ENCODE measurements at regions of chr18 and their contacts with region 1.

Region 1: GRCh38 chr18:23377669-23378301 is 75.3 kb upstream of the RIOK3 start:
- DNase-seq: no peak
- ATAC-seq: peak in 3 of 4 donors; percentile 41 to 63 (median 47)
- H3K4me3 ChIP-seq: no peak overlapping the region
- H3K27ac ChIP-seq: no peak overlapping the region
- H3K4me1 ChIP-seq: no peaks in the 10 kb centered on the region
- H3K27me3 ChIP-seq: no peaks in the 10 kb centered on the region
- CTCF ChIP-seq: no peak

Region 2: DNA sequence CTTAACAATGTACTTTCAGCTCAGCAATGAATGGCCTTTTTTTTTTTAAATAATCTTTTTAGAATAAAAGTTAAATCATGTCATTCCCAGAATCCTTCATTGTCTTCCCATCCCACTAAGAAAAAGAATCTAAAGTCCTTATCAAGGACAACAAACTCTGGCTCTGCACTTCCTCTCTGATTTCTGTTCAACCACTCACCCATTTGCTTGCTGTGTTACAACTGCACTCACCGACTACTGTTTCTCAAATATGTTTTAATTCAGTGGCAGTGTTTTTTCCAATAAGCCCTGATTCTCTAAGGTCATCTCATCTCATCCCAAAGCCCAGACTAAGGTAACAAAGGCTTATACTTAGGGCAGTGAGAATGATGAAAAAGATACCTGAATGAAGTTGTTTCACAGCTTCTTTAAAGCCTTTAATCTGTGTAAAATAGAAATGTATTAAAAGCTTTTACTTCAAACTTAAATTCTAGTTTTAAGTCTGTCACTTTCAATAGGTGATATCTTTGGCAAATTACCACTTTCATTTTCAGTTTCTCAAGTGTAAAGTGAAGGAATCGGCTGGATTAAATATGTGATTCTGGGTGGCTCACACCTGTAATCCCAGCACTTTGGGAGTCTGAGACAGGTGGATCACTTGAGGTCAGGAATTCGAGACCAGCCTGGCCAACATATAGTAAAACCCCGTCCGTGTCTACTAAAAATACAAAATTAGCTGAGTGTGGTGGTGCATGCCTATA is 357.1 kb before region 1 on chr18:
- intact Hi-C with region 1: loop called in 1 of 3 experiments (anchors 10 kb)
- DNase-seq: no peak
- ATAC-seq: no peak
- H3K4me3 ChIP-seq: no peak overlapping the region
- H3K27ac ChIP-seq: no peak overlapping the region
- H3K4me1 ChIP-seq: no peaks in the 10 kb centered on the region
- H3K27me3 ChIP-seq: no peaks in the 10 kb centered on the region
- CTCF ChIP-seq: no peak

Region 3: GRCh38 chr18:23088310-23088870 is 289.4 kb before region 1 on chr18:
- intact Hi-C with region 1: no loop called
- DNase-seq: no peak
- ATAC-seq: no peak
- H3K4me3 ChIP-seq: no peak overlapping the region
- H3K27ac ChIP-seq: no peak overlapping the region
- H3K4me1 ChIP-seq: no peaks in the 10 kb centered on the region
- H3K27me3 ChIP-seq: no peaks in the 10 kb centered on the region
- CTCF ChIP-seq: no peak

Region 4: GRCh38 chr18:23126376-23127056 is 251.3 kb before region 1 on chr18:
- intact Hi-C with region 1: loop called in 2 of 3 experiments (anchors 10 kb)
- DNase-seq: no peak
- ATAC-seq: no peak
- H3K4me3 ChIP-seq: no peak overlapping the region
- H3K27ac ChIP-seq: no peak overlapping the region
- H3K4me1 ChIP-seq: no peaks in the 10 kb centered on the region
- H3K27me3 ChIP-seq: no peaks in the 10 kb centered on the region
- CTCF ChIP-seq: no peak

Region 5: GRCh38 chr18:23131693-23132319 is 246.0 kb before region 1 on chr18:
- intact Hi-C with region 1: loop called in 2 of 3 experiments (anchors 10 kb)
- DNase-seq: peak in 3 of 6 donors; percentile 43 to 62 (median 56)
- ATAC-seq: peak in 3 of 4 donors; percentile 8 to 54 (median 36)
- H3K4me3 ChIP-seq: no peak overlapping the region
- H3K27ac ChIP-seq: no peak overlapping the region
- H3K4me1 ChIP-seq: peaks cover 0 to 18% (median 6%) of the 10 kb centered on the region in 3 donors
- H3K27me3 ChIP-seq: no peaks in the 10 kb centered on the region
- CTCF ChIP-seq: peak; percentile 38 to 73 (median 63)

Measured in pancreas (tissue), 10 donors.